PC-9 (cell line): ENCODE measurements at regions of chr13 and their contacts with region 1.

Region 1: DNA sequence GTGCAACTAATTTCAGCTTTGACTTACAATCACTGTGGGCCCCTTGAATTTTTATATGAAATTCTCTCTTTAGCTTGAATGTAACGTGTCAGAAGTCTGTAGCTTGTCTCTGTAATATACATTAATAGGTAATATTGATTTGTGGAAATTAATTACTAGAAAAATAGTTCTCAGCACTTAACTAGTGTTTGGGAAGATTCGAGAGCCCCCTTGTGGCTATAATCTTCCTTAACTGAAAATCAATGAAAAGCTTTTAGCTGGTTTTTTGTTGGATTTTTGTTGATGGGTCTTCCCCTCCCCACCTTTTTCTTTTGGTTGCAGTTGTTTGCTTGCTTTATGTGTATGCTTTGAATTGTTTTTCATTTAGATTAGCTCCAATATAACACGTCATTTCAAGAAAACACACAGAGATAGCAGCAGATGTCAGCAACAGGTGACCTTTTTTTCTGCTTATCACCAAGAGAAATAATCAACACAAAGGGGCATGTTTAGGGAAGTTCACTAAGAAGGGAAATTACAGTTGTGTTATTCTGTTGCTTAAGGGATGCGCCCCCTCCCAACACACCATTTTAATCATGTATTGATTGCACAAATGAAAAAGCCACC is 176.8 kb downstream of the OXGR1 start:
- DNase-seq: no peak
- H3K4me3 ChIP-seq: no peak overlapping the region
- H3K27ac ChIP-seq: no peak overlapping the region
- H3K4me1 ChIP-seq: no peaks in the 10 kb centered on the region
- H3K27me3 ChIP-seq: no peaks in the 10 kb centered on the region; the same call in 1 of the 2 replicates
- CTCF ChIP-seq: peak; percentile 80

Region 2: GRCh38 chr13:96020155-96020575 is 797.3 kb before region 1 on chr13:
- CTCF ChIA-PET with region 1: interaction called, 13 read pairs
- POLR2A ChIA-PET with region 1: no interaction called
- intact Hi-C with region 1: no loop called
- DNase-seq: peak; percentile 19 to 59
- H3K4me3 ChIP-seq: no peak overlapping the region
- H3K27ac ChIP-seq: no peak overlapping the region
- H3K4me1 ChIP-seq: no peaks in the 10 kb centered on the region
- H3K27me3 ChIP-seq: no peaks in the 10 kb centered on the region
- CTCF ChIP-seq: peak; percentile 86

Region 3: GRCh38 chr13:96141027-96141426 is 676.4 kb before region 1 on chr13:
- CTCF ChIA-PET with region 1: no interaction called
- POLR2A ChIA-PET with region 1: no interaction called
- intact Hi-C with region 1: loop called (anchors 10 kb)
- DNase-seq: peak in 1 of 2 experiments; percentile 40
- H3K4me3 ChIP-seq: no peak overlapping the region
- H3K27ac ChIP-seq: no peak overlapping the region
- H3K4me1 ChIP-seq: no peaks in the 10 kb centered on the region
- H3K27me3 ChIP-seq: no peaks in the 10 kb centered on the region
- CTCF ChIP-seq: peak; percentile 45